ENCODE measurements at regions of chr11 and their contacts with region 1.

Region 1: DNA sequence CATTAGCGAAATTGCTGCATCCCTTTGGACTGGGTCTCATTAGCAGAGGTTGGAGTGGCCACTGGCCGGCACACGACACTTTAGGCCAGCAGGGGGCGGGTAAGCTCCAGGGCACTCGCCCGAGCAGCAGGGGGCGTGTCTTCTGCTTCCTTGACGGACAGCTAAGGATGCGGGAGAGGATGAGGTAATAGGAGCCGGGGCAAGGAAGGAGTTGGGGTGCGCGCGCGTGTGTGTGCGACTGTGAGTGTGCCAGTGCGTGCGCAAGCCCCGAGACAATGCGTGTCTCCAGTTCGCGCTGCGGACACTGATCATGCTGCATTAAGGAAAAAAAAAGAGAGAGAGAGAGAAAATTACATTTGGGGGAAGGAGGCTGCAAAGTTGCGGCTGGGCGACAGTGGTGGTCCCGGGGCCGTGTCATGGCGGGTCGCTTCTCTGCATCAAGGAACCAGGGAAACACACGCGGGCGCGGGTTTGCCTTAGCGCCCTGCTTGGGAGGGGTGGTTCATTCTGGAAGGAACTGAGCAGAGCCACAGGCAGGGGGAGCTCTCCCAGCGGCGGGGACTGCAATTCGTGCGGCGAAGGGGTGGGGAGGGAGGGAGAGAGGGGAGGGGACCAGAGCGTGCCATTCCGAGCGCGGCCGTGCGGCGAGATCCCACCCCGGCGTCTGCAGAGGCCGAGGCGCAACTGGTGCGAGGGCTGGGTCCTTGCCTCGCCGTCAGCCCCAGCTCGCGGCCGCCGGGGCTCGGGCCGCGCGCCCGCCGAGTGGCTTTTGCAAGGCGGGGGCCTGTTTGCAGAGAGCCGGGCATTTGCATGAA is at the start of gene DTX4:
- DNase-seq: peak; percentile 96
- ATAC-seq: peak; percentile 58
- H3K4me3 Mint-ChIP-seq: peak within 1 kb of the TSS; percentile 90
- H3K27ac Mint-ChIP-seq: no peak within 1 kb of the TSS
- H3K4me1 Mint-ChIP-seq: peaks cover 26% of the 10 kb centered on the region
- H3K27me3 Mint-ChIP-seq: peaks cover 4% of the 10 kb centered on the region; the same call in 1 of the 2 replicates
- CTCF ChIP-seq: peak; percentile 83
- total RNA-seq, gene DTX4: 12.3 to 15.5 TPM (median 12.8 TPM) in 3 replicates

Region 2: GRCh38 chr11:58912124-58912523 is 259.6 kb before region 1 on chr11:
- CTCF ChIA-PET with region 1: no interaction called
- POLR2A ChIA-PET with region 1: no interaction called
- DNase-seq: no peak
- ATAC-seq: no peak
- H3K4me3 Mint-ChIP-seq: no peak overlapping the region
- H3K27ac Mint-ChIP-seq: no peak overlapping the region
- H3K4me1 Mint-ChIP-seq: no peaks in the 10 kb centered on the region
- H3K27me3 Mint-ChIP-seq: peaks cover 55% of the 10 kb centered on the region
- CTCF ChIP-seq: no peak

Region 3: DNA sequence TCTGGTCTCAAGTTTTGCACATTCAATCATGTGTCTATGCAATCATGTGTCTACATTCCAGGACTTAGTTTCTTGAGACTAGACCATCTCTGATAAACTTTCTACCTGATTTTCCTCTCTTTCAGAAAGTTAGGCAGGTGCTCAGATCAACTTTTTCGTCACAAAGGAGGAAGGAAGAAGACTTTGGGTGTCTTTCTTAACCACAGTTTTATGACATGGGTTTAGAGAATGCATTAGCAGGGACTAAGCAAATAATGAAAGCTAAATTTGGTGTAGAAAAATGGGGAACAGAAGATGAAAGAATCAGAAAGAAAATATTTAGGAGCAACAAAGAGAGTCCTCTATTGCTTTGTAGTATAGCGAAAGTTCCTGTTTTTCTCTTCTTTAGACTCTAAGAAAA is 93.3 kb before region 1 on chr11:
- CTCF ChIA-PET with region 1: no interaction called
- POLR2A ChIA-PET with region 1: no interaction called
- DNase-seq: no peak
- ATAC-seq: no peak
- H3K4me3 Mint-ChIP-seq: no peak overlapping the region
- H3K27ac Mint-ChIP-seq: no peak overlapping the region
- H3K4me1 Mint-ChIP-seq: peaks cover 10% of the 10 kb centered on the region
- H3K27me3 Mint-ChIP-seq: peaks cover 3% of the 10 kb centered on the region
- CTCF ChIP-seq: no peak

Region 4: DNA sequence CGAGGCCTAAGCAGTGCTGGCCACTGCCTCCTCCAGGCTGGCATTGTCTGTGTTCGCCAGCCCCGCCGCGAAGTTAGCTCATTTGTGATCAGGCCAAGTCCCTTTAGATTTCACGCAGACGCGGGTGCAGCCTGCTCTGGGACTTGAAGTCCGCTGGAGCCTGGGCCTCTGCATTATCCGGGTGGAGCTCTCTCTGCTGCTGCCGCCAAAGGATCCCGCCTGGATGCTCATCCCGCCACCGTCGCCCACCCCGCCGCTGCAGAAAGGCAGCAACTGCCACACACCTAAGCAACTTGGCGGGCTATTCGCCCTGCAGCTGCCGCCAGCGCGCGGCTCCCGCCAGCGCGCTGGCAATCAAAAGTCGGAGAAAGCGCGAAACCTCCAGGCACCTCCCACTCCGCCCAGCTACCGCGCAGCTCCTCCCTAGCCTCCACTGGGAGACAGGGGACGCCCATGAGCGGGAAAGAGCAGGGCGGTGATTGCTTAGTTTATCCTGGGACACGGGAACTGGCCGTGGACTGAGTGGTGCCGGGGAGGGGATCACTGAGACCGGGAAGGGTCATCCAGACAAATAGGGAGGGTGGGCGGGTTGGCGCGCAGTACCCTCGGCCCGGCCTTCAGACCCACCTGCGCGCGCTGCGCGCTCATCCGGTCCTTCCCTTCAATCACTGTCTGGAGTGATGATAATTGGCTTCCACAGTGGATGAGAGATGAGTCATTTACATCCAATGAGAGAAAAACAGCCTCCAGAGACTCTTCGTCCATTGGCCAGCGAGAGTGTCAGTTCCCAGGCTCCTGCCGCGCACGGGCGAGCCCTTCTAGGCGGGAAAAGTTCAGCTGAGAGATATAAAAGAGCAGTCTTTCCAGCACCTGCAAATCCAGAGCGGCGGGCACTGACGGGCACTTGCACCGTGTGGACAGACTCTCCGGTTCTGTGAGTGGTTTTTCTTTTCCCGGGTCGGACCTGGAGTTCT is 65.1 kb before region 1 on chr11 and contains the start of gene FAM111B:
- CTCF ChIA-PET with region 1: interaction called, 15 read pairs
- POLR2A ChIA-PET with region 1: no interaction called
- DNase-seq: peak; percentile 82
- ATAC-seq: peak; percentile 82
- H3K4me3 Mint-ChIP-seq: peak within 1 kb of the TSS; percentile 85
- H3K27ac Mint-ChIP-seq: no peak within 1 kb of the TSS; the same call in 1 of the 2 replicates
- H3K4me1 Mint-ChIP-seq: peaks cover 35% of the 10 kb centered on the region
- H3K27me3 Mint-ChIP-seq: peaks cover 51% of the 10 kb centered on the region
- CTCF ChIP-seq: no peak
- total RNA-seq, gene FAM111B: 16.3 to 25.5 TPM (median 17.7 TPM) in 3 replicates

Region 5: GRCh38 chr11:59142530-59143507 is 28.9 kb before region 1 on chr11 and contains the start of gene FAM111A:
- CTCF ChIA-PET with region 1: interaction called, 16 read pairs
- POLR2A ChIA-PET with region 1: interaction called, 6 read pairs
- DNase-seq: peak; percentile 81
- ATAC-seq: peak; percentile 80
- H3K4me3 Mint-ChIP-seq: peak within 1 kb of the TSS; percentile 86
- H3K27ac Mint-ChIP-seq: peak within 1 kb of the TSS; percentile 96
- H3K4me1 Mint-ChIP-seq: peaks cover 42% of the 10 kb centered on the region
- H3K27me3 Mint-ChIP-seq: peaks cover 13% of the 10 kb centered on the region
- CTCF ChIP-seq: no peak
- total RNA-seq, gene FAM111A: 18.8 to 24.4 TPM (median 22.0 TPM) in 3 replicates

Region 6: DNA sequence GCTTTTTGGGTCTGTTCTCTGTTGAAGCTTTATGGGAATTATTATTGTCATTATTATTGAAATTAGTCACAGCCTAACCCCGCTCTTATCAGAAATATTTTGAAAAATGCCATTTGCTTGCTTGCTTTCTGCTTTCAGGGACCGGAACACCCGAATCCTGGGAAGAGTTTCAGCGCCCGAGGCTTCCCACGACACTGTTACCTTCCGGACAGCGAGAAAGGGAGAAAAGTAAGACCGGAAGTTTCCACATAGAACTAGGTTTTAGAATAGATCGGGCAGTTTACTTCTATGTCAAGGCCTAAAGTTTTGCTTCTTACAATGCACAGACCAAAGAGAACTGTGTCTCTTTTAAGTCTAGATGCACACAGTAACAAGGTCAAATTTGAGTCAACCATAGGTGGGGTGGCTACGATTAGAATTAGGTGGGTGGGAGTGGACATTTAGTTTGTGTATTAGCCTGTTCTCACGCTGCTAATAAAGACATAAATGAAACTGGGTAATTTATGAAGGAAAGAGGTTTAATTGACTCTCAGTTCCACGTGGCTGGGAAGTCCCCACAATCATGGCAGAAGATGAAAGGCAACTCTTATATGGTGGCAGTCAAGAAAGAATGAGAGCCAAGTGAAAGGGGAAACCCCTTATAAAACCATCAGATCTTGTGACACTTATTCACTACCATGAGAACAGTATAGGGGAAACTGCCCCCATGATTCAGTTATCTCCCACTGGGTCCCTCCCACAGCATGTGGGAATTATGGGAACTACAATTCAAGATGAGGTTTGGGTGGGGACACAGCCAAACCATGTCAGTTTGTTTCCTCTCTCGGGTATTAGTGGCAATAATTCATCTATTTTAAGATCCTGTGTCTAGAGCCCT is 28.1 kb after region 1 on chr11:
- CTCF ChIA-PET with region 1: interaction called, 10 read pairs
- POLR2A ChIA-PET with region 1: no interaction called
- DNase-seq: no peak
- ATAC-seq: no peak
- H3K4me3 Mint-ChIP-seq: no peak overlapping the region
- H3K27ac Mint-ChIP-seq: no peak overlapping the region
- H3K4me1 Mint-ChIP-seq: no peaks in the 10 kb centered on the region
- H3K27me3 Mint-ChIP-seq: no peaks in the 10 kb centered on the region
- CTCF ChIP-seq: no peak

Region 7: DNA sequence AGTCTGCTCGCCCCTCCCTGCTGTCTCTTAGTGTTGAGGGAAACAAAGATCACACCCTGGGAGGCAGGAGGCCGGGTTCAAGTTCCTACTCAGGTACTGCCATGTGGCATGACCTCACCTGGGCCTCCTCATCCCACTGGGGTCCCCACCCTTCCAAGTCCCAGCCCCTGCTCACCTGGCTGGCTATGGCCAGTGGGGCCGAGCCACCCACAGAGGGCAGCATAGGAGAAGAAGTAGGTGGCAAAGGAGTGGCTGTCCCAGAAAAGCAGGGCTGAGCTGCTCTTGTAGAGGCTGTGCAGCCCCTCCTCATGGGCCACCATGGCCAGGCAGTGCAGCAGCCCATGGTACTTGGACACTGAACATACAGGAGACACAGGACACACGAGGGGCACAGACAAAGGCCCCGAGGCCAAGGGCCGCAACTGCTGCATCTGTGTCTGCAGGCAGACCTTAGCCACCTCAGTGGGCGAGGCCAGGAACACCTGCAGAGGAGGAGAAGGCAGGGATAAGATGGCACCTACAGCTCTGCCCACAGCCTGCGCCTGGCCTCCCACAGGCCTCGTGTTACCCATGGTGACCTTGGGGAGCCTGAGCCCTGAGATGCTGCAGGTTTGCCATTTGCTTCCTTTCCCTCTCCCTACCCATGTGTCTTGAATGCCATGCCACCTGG is 91.6 kb after region 1 on chr11:
- CTCF ChIA-PET with region 1: interaction called, 13 read pairs
- POLR2A ChIA-PET with region 1: no interaction called
- DNase-seq: peak; percentile 76
- ATAC-seq: peak; percentile 91
- H3K4me3 Mint-ChIP-seq: no peak overlapping the region
- H3K27ac Mint-ChIP-seq: no peak overlapping the region
- H3K4me1 Mint-ChIP-seq: peaks cover 7% of the 10 kb centered on the region
- H3K27me3 Mint-ChIP-seq: no peaks in the 10 kb centered on the region
- CTCF ChIP-seq: no peak; the same call in 1 of the 2 replicates